ENCODE measurements at regions of chr3 and their contacts with region 1.

Region 1: DNA sequence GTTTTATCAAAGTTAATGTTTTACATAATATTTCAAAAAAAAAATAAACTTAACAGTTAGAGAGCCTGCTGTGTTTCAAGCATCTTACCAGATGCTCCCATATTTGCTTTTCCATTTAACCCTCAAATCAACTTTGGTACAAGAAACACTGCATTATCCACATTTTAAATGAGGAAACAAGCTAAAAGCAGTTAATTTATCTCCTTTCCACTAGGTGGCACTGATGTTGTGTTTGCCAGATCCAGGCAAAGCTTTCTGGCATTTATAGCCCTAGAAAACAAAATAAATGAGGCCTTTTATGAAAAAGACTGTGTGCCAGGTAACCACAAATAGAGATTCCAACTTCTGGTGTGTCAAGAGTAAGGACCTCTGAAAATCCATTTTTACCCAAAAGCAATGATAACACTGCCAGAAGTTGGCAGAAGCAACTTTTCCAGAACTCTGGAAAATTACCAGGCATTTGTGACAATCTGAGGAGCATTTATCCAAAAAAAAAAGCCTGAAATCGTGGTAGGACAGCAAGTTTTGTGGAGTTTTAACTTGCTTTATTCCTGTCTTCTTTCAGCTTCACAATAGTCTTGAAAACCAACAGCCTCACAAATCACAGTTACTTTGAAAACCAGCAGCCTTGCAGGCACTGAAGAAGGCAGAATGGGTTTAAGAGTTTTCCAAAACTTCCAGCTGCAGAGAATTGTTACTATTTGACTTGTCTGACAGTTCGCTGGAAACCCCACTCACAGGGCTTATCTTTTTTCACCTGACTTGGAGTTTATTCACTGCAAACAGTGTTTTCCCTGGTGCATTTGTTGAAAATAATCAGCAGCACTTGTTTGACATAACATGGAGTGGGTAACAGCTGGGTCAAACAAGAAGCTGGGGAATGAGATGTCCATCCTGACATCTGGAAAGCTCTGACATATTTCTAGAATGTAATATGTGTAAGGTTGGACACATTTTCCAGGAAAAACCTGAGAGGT is 9.2 kb downstream of the FAM162A start:
- DNase-seq: no peak
- H3K4me3 ChIP-seq: no peak overlapping the region
- H3K27ac ChIP-seq: no peak overlapping the region
- H3K27me3 ChIP-seq: no peaks in the 10 kb centered on the region
- CTCF ChIP-seq: peak; percentile 82

Region 2: GRCh38 chr3:122245513-122246174 is 147.5 kb before region 1 on chr3:
- CTCF ChIA-PET with region 1: no interaction called
- POLR2A ChIA-PET with region 1: no interaction called
- DNase-seq: peak; percentile 30
- H3K4me3 ChIP-seq: no peak overlapping the region
- H3K27ac ChIP-seq: no peak overlapping the region
- H3K27me3 ChIP-seq: no peaks in the 10 kb centered on the region
- CTCF ChIP-seq: peak; percentile 23; the same call in 1 of the 2 replicates

Region 3: DNA sequence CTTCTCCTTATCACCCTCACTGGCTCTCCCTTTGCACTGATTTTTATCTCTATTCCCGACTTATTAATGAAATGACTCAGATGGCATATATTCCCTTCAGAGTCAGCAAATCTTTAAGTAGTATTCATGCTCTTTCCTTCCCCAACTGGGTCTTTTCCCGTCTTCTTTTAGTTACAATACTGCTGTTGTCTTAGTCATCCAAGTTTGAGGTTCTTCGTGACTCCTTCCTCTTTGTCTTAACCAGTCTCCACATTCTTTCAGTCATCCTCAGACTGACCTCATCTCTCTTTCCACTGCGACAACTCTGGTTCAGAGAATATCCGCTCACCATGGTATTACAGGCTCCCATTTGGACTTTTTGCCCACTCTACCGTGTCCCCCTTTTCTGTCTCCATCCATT is 10.3 kb after region 1 on chr3:
- CTCF ChIA-PET with region 1: interaction called, 36 read pairs
- POLR2A ChIA-PET with region 1: no interaction called
- DNase-seq: no peak
- H3K4me3 ChIP-seq: no peak overlapping the region
- H3K27ac ChIP-seq: no peak overlapping the region
- H3K27me3 ChIP-seq: no peaks in the 10 kb centered on the region
- CTCF ChIP-seq: no peak

Region 4: DNA sequence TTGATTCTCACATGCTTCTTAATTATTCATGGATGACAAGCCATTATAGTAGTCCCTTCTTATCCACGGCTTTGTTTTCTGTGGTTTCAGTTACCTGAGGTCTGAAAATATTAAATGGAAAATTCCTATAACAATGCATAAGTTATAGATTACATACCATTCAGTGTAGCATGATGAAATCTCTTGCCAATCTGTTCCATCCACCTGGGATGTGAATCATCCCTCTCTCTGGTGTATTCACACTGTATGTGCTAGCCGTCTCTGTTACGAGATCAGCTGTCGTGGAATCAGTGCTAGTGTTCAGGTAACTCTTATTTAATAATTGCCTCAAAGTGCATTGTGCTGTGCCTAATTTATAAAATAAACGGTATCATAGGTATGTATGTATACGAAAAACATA is 17.5 kb after region 1 on chr3:
- CTCF ChIA-PET with region 1: interaction called, 36 read pairs
- POLR2A ChIA-PET with region 1: interaction called, 3 read pairs
- DNase-seq: no peak
- H3K4me3 ChIP-seq: no peak overlapping the region
- H3K27ac ChIP-seq: no peak overlapping the region
- H3K27me3 ChIP-seq: no peaks in the 10 kb centered on the region
- CTCF ChIP-seq: no peak

Region 5: DNA sequence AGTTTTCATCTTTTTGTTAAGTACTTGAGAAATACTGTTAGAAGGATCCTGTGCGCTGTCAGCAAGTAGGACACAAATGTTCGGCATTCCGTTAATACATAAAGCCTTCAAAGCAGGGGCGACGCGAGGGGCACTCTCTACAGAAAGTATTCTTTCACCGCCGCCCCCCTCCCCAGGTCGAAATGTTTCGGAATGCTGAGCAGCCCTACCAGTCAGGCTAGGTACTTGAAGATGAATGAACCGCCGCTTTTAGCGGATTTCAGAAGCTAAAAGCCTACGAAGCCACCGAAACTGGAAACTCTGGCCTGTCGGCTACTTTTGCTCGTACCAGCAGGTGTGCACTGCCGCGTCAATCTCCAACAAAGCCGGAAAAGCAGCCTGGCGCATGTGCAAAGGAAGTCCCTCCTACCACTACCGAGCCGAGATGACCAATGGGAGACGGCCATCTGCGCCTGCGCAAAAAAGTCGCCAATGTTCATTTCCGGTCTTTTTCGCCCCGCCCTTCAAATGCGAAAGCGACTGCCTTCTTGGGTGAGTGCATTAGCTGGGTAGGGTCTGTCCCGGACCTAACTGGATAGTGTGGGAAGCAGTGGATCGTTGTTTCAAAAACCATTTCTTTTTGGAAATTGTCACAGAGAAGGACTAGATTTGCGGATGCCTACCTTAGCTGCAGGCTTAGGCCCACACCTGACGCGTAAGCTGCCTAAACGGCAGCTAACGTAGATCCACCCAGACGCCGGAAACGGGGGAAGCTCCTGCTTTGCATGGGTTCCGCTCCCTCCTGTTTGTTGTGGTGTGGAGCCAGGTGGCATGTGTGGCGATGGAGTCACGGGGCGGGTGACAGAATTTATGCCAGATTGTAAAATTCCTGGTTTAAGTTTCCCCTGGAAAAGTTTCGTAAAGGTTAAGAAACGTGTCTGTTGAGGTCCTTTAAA is 22.8 kb after region 1 on chr3 and contains the start of gene WDR5B:
- CTCF ChIA-PET with region 1: interaction called, 12 read pairs
- POLR2A ChIA-PET with region 1: interaction called, 4 read pairs
- DNase-seq: peak; percentile 94
- H3K4me3 ChIP-seq: peak within 1 kb of the TSS; percentile 95
- H3K27ac ChIP-seq: peak within 1 kb of the TSS; percentile 90
- H3K27me3 ChIP-seq: no peaks in the 10 kb centered on the region
- CTCF ChIP-seq: 0 out of 2 replicates have a peak, but pooled peaks have one; percentile 23
- polyA plus RNA-seq, gene WDR5B: 5.7 and 8.5 TPM in 2 replicates